ENCODE measurements at regions of chr16 and their contacts with region 1.

Region 1: GRCh38 chr16:17467923-17468540 is 2.7 kb downstream of the XYLT1 start:
- DNase-seq: peak; percentile 82
- H3K4me3 ChIP-seq: peak overlapping the region; percentile 90
- H3K27ac ChIP-seq: peak overlapping the region; percentile 56; the same call in 1 of the 2 replicates
- H3K4me1 ChIP-seq: peaks cover 31% of the 10 kb centered on the region
- H3K27me3 ChIP-seq: no peaks in the 10 kb centered on the region

Region 2: GRCh38 chr16:16861546-16861945 is 606.5 kb before region 1 on chr16:
- in situ Hi-C with region 1: loop called (anchors 25 kb)
- DNase-seq: peak; percentile 75
- H3K4me3 ChIP-seq: no peak overlapping the region
- H3K27ac ChIP-seq: no peak overlapping the region
- H3K4me1 ChIP-seq: no peaks in the 10 kb centered on the region
- H3K27me3 ChIP-seq: no peaks in the 10 kb centered on the region; the same call in 1 of the 2 replicates

Region 3: GRCh38 chr16:17205279-17206211 is 262.5 kb before region 1 on chr16:
- in situ Hi-C with region 1: loop called (anchors 10 kb)
- DNase-seq: peak; percentile 44
- H3K4me3 ChIP-seq: no peak overlapping the region
- H3K27ac ChIP-seq: no peak overlapping the region
- H3K4me1 ChIP-seq: no peaks in the 10 kb centered on the region
- H3K27me3 ChIP-seq: no peaks in the 10 kb centered on the region

Region 4: DNA sequence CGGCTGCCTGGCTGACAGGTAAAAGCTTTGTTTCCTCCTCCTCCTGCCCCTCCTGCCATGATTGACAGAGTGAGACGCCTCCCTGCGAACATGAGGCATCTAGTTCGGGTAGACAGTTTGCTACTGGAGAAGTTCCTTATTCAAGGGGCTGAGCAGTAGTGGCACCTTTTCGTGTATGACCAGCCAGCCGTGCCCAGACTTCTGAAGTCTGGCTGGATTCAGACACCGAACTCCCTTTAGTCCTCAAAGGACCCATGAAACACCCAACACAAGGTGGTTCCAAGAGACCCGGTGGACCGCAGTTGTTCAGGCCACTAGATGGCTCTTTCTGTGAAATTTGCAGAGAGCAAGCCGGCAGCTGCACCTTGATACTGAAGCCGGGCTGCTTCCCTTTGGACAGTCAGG is 190.1 kb before region 1 on chr16:
- in situ Hi-C with region 1: loop called (anchors 10 kb)
- DNase-seq: peak; percentile 12
- H3K4me3 ChIP-seq: no peak overlapping the region
- H3K27ac ChIP-seq: no peak overlapping the region
- H3K4me1 ChIP-seq: peaks cover 11% of the 10 kb centered on the region
- H3K27me3 ChIP-seq: no peaks in the 10 kb centered on the region